GM10248 (cell line): ENCODE measurements at regions of chr2 and their contacts with region 1.

Region 1: DNA sequence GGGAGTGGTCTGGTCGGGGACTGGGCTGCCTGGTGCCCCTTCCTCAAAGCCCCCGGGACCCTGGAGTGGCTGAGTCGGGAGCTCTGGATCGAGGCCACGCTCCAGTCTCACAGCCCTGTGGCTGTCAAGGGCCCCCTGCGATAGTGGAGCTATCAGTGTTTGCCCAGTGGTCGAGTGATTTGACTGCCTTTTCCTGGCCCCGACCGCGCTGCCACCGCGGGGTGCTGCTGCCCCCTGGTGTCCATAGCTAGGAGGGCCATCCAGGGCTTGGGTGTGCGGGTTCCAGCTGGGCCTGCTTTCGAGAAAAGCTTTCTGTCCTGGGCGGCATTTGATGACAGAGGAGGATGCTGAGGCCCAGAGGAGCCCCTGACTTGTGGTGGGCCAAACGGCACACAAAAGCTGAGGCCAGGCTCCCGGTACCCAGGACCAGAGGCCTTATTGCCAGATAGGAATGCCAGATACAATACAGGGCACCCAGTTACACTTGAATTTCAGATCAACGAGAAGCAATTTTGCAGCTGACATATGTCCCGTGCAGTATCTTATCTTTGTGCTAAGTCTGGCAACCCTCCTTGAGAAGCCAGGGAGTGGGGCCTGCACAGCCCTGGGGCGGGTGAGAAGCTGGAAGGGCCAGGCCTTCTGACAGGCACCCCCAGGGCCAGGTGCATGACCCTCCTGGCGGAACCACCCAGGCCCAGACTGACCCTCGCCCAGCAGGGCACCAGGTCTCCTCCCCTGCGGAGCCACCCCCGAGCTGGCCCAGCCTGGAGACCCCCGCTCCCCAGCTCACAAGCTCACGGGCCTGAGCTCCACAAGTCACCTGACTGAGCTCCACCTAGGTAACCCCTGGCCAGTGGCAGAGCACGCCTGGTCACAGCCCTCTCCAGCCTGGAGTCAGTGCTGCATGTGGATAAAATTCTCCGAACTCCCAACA is 13.0 kb downstream of the ODC1 start:
- DNase-seq: peak; percentile 89
- CTCF ChIP-seq: peak; percentile 96

Region 2: GRCh38 chr2:9813312-9814133 is 621.6 kb before region 1 on chr2:
- CTCF ChIA-PET with region 1: interaction called, 17 read pairs
- POLR2A ChIA-PET with region 1: no interaction called
- DNase-seq: peak; percentile 89
- CTCF ChIP-seq: peak; percentile 94

Region 3: DNA sequence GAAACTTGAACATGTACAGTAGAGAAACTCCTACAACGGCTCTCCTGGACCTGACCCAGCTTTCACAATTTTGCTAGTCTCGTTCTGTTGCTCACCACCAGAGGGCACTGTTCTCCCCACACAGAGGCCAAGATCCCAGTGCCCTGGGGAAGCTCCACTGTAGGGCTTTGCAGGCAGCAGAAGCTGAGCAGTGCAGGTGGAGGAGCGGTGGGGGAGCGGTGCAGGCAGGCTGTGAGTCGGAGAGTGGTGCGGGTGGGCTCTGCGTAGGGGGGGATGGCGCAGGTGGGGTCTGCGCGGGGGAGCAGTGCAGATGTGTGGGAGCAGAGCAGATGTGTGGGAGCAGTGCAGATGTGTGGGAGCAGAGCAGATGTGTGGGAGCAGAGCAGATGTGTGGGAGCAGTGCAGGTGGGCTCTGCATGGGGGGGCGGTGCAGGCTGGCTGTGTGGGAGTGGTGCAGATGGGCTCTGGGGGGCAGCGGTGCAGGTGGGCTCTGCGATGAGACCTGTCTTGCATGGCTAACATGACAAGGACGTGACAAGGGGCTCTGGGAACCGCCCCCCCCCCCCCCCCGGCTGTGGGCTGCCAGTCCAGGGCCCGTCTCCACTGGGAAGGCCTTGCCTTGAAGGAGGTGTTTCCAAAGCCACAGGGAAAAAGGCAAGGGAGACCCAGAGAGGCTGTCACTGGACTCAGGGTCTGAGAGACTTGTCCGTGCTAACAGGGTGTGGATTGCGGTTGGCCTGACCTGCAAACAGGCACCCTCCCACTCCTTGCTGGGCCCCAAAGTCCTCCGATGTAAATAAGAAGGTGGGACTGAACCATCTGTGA is 362.3 kb before region 1 on chr2:
- CTCF ChIA-PET with region 1: interaction called, 194 read pairs
- POLR2A ChIA-PET with region 1: interaction called, 4 read pairs
- DNase-seq: peak; percentile 90
- CTCF ChIP-seq: peak; percentile 83

Region 4: DNA sequence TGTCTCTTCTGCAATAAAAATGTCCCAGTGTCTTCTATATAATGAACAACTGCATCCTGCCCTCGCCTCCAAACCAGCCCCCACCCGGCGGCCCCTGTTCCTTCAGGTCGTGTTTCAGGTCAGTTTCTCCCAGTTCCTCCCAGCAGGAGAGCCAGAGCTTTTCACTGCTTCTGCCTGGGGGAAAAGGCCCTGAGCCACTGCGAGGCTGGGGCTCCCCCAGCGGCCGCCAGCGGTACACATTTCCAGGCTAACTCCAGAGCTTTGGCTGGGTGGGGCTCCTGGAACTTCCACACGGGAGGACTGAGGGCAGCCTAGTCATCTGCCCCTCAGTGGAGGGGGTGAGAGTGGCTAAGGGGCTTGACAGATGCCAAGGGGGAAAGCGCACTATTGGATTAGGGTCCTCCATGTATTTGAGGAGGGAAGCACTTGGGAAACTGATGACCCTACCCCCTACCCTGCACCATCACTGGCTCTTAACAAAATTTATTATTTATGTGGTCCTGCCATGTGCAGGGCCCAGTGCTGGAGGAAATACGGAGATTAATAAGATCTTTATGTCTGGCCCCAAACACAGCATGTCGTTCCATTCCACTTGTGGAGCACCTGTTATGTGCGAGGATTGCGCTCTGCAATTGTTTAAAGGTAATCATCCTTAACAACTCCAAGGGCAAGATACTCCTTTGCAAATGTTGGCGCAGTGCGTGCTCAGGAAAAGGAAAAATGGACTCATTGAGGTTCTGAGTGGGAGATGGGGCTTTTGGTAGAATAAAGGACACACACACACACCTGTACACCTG is 337.6 kb before region 1 on chr2:
- CTCF ChIA-PET with region 1: interaction called, 15 read pairs
- POLR2A ChIA-PET with region 1: no interaction called
- DNase-seq: peak; percentile 76
- CTCF ChIP-seq: peak; percentile 92

Region 5: GRCh38 chr2:10163498-10164486 is 271.4 kb before region 1 on chr2:
- CTCF ChIA-PET with region 1: interaction called, 12 read pairs
- POLR2A ChIA-PET with region 1: no interaction called
- DNase-seq: no peak
- CTCF ChIP-seq: no peak

Region 6: DNA sequence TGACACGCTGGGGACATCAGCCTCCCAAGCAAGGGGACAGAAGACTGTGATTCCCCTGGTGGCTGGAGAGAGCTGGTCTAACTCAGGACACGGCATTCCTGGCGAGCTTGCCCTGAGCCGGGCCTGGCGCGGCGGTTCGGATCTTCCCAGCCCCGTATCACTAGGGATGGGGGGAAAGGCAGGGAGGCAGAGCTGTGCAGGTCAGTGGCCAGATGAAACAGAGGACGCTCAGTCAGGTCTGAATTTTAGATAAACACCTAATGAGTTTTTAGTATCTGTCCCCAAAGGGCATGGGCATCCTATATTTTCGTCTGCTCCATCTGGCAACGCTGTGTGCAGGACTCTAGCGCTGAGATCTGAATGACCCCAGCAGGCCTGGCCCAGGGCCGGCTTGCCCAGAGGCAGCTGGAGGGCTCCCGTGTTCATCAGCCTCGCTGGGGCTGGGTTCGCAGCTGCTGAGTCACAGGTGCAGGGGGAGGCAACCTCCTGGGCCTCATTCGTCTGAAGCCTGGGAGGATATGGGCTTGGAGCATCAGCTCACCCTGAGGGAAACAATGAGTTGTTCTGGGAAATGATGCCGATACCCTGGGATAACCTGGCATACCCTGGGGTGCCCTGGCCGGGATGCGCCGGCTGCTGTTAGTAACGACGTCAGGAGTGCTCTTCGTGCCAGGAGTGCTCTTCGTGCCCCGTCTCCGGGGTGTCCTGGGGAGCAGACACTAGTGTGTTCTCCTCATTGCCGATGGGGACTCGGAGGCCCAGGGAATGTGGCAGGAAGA is 180.6 kb before region 1 on chr2:
- CTCF ChIA-PET with region 1: no interaction called
- POLR2A ChIA-PET with region 1: no interaction called
- DNase-seq: no peak
- CTCF ChIP-seq: no peak

Region 7: DNA sequence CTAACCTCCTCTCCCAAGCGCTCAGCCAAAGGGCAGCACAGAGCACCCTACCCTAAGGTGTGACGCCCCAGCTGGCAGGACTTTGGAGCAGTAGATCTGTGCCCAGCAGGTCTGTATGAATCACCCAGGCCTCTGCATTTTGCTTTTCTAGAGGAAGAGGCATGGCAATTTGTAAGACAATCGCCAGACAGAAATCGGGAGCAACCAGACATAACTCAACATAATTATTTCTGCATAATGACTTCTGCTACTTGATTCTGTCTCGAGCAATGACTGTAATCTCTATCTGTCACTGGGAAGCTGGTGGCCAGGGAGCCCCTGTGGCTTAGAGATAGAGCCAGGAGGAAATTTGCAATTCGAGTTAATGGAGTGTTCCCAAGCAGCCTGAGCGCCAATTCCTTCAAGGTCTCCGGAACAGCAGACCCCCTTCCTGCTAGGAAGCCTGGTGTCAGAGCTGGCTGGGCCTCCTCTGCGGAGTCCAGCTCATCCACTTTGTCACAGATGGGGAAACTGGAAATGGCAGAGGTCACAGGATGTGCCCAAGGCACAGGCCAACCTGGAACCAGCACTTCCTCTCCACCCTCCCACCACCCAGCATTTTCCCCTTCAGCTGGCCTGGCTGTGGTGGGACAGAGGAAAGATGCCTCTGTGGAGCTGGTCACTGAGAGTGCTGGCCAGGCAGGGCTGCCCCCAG is 42.1 kb before region 1 on chr2:
- CTCF ChIA-PET with region 1: interaction called, 11 read pairs
- POLR2A ChIA-PET with region 1: no interaction called
- DNase-seq: no peak
- CTCF ChIP-seq: no peak

Region 8: DNA sequence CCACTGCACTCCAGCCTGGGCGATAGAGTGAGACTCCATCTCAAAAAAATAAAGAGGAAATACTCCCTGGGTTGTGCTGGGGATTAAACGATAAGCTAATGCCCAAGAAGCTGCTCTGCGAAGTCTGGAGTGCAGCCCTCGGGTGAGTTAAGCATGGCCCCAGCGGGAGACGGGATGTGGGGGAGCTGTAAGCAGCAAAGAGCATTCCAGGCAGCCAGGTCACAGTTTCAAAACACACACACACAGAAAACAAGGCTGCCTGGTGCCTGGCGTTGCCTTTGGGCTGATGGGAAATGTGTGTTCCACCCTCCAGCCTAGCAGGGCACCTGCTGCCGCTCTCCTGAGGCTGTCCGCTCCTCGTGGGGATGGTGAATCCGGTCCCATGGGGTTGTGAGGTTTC is 11.1 kb before region 1 on chr2:
- CTCF ChIA-PET with region 1: interaction called, 61 read pairs
- POLR2A ChIA-PET with region 1: no interaction called
- DNase-seq: no peak
- CTCF ChIP-seq: no peak